ENCODE measurements at regions of chr1 and their contacts with region 1.

Region 1: DNA sequence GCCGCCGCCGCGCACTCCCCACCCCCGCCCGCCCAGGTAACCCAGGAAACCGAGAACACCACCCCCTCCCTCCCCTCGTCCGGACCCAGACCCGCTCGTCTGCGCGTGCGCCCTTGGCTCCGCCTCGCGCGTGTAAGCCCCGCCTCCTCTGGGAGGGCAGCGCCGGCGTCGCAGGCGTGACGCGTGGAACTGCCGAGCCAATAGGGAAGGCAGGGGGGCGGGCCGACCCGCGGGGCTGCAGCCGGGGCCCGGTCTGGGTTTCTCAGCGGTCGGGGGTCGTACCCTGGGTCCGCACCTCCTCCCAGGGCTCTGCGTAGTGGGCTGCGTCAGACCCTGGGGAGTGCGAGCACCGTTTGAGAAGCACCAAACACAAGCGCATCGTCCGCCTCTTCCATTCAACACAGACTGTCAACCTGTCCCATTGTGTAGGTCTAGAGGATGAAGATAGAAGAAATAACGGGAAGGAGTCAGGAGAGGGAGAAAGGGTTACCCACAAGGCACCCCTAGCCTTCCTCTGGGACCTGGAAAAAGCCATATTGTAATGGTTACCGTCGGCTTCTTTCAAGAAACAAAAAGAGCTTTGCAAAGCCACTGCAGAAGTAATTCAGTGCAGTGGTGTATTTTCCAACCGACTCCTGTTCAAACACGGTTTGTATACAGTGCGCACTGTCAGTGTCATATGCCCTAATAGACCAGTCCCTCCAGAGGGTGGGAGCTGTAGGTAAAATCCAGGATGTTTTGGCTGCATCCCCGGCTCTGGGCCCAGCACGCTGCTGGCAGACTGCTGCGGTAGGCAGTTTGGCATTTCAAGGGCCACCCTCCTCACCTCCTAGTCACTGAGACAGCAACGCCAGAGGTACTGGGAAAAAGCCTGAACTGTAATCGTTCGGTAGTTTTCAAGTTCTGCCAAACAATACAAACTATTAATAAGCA is 473 bp upstream of the LYST start:
- DNase-seq: peak; percentile 96 to 99 (median 98)
- ATAC-seq: peak; percentile 75
- H3K4me3 ChIP-seq: peak overlapping the region; percentile 74 to 89
- H3K4me3 Mint-ChIP-seq: peak overlapping the region; percentile 95
- H3K27ac ChIP-seq: peak overlapping the region; percentile 95 to 99
- H3K27ac Mint-ChIP-seq: peak overlapping the region; percentile 99
- H3K4me1 ChIP-seq: peaks cover 27% of the 10 kb centered on the region
- H3K4me1 Mint-ChIP-seq: peaks cover 52% of the 10 kb centered on the region
- H3K27me3 ChIP-seq: no peaks in the 10 kb centered on the region
- H3K27me3 Mint-ChIP-seq: no peaks in the 10 kb centered on the region
- CTCF ChIP-seq: no peak

Region 2: GRCh38 chr1:234610348-234611152 is 1256.6 kb before region 1 on chr1:
- CTCF ChIA-PET with region 1: no interaction called
- POLR2A ChIA-PET with region 1: no interaction called
- intact Hi-C with region 1: loop called in 1 of 2 experiments (anchors 2 kb)
- DNase-seq: peak; percentile 78 to 98 (median 89)
- ATAC-seq: peak; percentile 42
- H3K4me3 ChIP-seq: peak overlapping the region; percentile 78 to 86
- H3K4me3 Mint-ChIP-seq: peak overlapping the region; percentile 92
- H3K27ac ChIP-seq: peak overlapping the region; percentile 97 to 99
- H3K27ac Mint-ChIP-seq: peak overlapping the region; percentile 98
- H3K4me1 ChIP-seq: peaks cover 46% of the 10 kb centered on the region
- H3K4me1 Mint-ChIP-seq: peaks cover 49% of the 10 kb centered on the region
- H3K27me3 ChIP-seq: no peaks in the 10 kb centered on the region
- H3K27me3 Mint-ChIP-seq: no peaks in the 10 kb centered on the region
- CTCF ChIP-seq: no peak

Region 3: GRCh38 chr1:235648954-235649367 is 218.2 kb before region 1 on chr1:
- CTCF ChIA-PET with region 1: no interaction called
- POLR2A ChIA-PET with region 1: no interaction called
- intact Hi-C with region 1: loop called in 1 of 2 experiments (anchors 10 kb)
- DNase-seq: peak; percentile 20 to 86 (median 61)
- ATAC-seq: peak; percentile 74
- H3K4me3 ChIP-seq: peak overlapping the region; percentile 24 to 35
- H3K4me3 Mint-ChIP-seq: peak overlapping the region; percentile 85
- H3K27ac ChIP-seq: no peak overlapping the region
- H3K27ac Mint-ChIP-seq: peak overlapping the region; percentile 83
- H3K4me1 ChIP-seq: peaks cover 19% of the 10 kb centered on the region
- H3K4me1 Mint-ChIP-seq: peaks cover 13% of the 10 kb centered on the region
- H3K27me3 ChIP-seq: peaks cover 10 to 25% of the 10 kb centered on the region in 2 experiments
- H3K27me3 Mint-ChIP-seq: peaks cover 58% of the 10 kb centered on the region
- CTCF ChIP-seq: no peak

Region 4: GRCh38 chr1:235855811-235856429 is 11.3 kb before region 1 on chr1:
- CTCF ChIA-PET with region 1: interaction called, 7 read pairs
- POLR2A ChIA-PET with region 1: interaction called, 4 read pairs
- intact Hi-C with region 1: loop called in 1 of 2 experiments (anchors 1 kb)
- DNase-seq: peak in 1 of 9 experiments; percentile 41
- ATAC-seq: peak; percentile 54
- H3K4me3 ChIP-seq: no peak overlapping the region
- H3K4me3 Mint-ChIP-seq: peak overlapping the region; percentile 20
- H3K27ac ChIP-seq: peak overlapping the region in 1 of 2 experiments; percentile 40
- H3K27ac Mint-ChIP-seq: peak overlapping the region; percentile 24
- H3K4me1 ChIP-seq: peaks cover 18% of the 10 kb centered on the region
- H3K4me1 Mint-ChIP-seq: peaks cover 51% of the 10 kb centered on the region
- H3K27me3 ChIP-seq: no peaks in the 10 kb centered on the region
- H3K27me3 Mint-ChIP-seq: no peaks in the 10 kb centered on the region
- CTCF ChIP-seq: no peak

Region 5: DNA sequence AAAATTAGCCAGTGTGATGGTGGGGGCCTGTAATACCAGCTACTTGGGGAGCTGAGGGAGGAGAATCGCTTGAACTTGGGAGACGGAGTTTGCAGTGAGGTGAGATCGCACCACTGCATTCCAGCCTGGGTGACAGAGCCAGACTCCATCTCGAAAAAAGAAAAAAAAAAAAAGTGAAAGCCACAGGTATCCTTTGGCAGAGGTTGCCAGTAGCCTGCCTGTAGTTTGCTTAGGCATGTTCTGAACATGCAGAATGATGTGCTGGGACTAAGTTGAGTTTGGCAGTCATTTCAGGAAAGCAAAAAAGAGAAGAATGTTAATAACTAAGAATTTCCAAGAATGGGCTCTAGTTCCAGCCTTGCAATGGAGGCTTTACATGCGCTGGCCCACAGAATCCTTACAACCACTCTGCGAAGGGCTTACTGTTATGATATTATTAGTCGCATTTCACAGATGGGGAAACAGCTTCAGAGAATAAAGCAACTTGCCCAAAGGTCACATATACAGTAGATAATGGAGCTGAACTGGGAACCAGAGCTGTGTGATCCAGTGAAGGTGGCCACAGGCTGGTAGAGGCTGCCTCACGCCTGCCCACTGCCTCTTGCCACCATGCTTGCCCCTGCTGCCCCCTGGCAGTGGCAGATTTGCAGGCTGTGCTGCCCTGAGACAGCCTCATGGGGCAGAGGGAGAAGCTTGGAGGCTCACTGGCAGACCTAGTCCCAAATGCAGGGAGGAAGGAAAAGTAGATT is 66.0 kb after region 1 on chr1:
- CTCF ChIA-PET with region 1: interaction called, 3 read pairs
- POLR2A ChIA-PET with region 1: interaction called, 4 read pairs
- intact Hi-C with region 1: loop called in 1 of 2 experiments (anchors 5 kb)
- DNase-seq: peak in 2 of 9 experiments; percentile 36 to 47
- ATAC-seq: no peak
- H3K4me3 ChIP-seq: no peak overlapping the region
- H3K4me3 Mint-ChIP-seq: no peak overlapping the region
- H3K27ac ChIP-seq: no peak overlapping the region
- H3K27ac Mint-ChIP-seq: no peak overlapping the region
- H3K4me1 ChIP-seq: no peaks in the 10 kb centered on the region
- H3K4me1 Mint-ChIP-seq: peaks cover 22% of the 10 kb centered on the region
- H3K27me3 ChIP-seq: no peaks in the 10 kb centered on the region
- H3K27me3 Mint-ChIP-seq: no peaks in the 10 kb centered on the region
- CTCF ChIP-seq: no peak

Region 6: GRCh38 chr1:236281654-236282424 is 414.7 kb after region 1 on chr1 and contains the start of gene ERO1B:
- CTCF ChIA-PET with region 1: no interaction called
- POLR2A ChIA-PET with region 1: no interaction called
- intact Hi-C with region 1: loop called (anchors 5 kb)
- DNase-seq: peak; percentile 96 to 99 (median 97)
- ATAC-seq: peak; percentile 93
- H3K4me3 ChIP-seq: peak within 1 kb of the TSS; percentile 75 to 90
- H3K4me3 Mint-ChIP-seq: peak within 1 kb of the TSS; percentile 97
- H3K27ac ChIP-seq: peak within 1 kb of the TSS; percentile 72 to 85
- H3K27ac Mint-ChIP-seq: peak within 1 kb of the TSS; percentile 92
- H3K4me1 ChIP-seq: peaks cover 28% of the 10 kb centered on the region
- H3K4me1 Mint-ChIP-seq: peaks cover 52% of the 10 kb centered on the region
- H3K27me3 ChIP-seq: no peaks in the 10 kb centered on the region
- H3K27me3 Mint-ChIP-seq: no peaks in the 10 kb centered on the region
- CTCF ChIP-seq: no peak
- total RNA-seq, gene ERO1B: 16.2 to 16.6 TPM

Region 7: GRCh38 chr1:236603991-236604904 is 737.1 kb after region 1 on chr1 and contains the start of gene HEATR1:
- CTCF ChIA-PET with region 1: no interaction called
- POLR2A ChIA-PET with region 1: no interaction called
- intact Hi-C with region 1: loop called in 1 of 2 experiments (anchors 2 kb)
- DNase-seq: peak; percentile 62 to 94 (median 82)
- ATAC-seq: peak; percentile 86
- H3K4me3 ChIP-seq: peak within 1 kb of the TSS; percentile 90 to 93
- H3K4me3 Mint-ChIP-seq: peak within 1 kb of the TSS; percentile 96
- H3K27ac ChIP-seq: peak within 1 kb of the TSS; percentile 65 to 77
- H3K27ac Mint-ChIP-seq: peak within 1 kb of the TSS; percentile 98
- H3K4me1 ChIP-seq: peaks cover 23% of the 10 kb centered on the region
- H3K4me1 Mint-ChIP-seq: peaks cover 39% of the 10 kb centered on the region
- H3K27me3 ChIP-seq: peaks cover 0 to 3% of the 10 kb centered on the region in 2 experiments
- H3K27me3 Mint-ChIP-seq: peaks cover 11% of the 10 kb centered on the region
- CTCF ChIP-seq: no peak
- total RNA-seq, gene HEATR1: 52.1 to 53.7 TPM

Measured in CD8-positive, alpha-beta T cell (primary cell).